CD4-positive, alpha-beta T cell (primary cell): ENCODE measurements at regions of chr3 and their contacts with region 1.

Region 1: DNA sequence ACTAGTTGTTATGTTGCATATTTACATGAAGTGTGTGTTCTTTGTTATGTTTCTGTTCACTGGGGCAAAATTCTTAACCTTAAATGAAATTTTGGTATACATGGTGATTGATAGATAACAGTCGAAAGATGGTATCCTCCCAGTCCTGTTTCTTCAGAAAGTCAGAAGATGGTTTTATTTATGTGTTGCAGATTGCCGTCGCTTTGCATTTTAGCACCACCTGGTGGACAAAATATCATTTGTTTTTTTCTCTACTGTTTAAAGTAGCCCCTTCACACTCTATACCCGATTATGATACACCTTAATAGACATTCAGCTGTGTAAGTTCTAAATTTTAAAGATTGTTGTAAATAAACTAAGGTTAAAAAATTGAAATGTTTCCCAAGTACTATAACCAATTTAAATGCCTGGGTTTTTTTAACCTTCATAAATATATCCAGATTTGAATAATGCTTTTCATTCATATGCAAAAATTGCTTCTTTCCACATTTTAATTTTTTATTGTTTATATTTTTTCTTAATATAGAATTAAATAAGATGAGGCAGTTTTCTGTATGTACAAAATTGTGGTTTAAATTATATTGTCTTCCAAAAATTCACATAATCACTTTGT is 152.2 kb downstream of the ALCAM start:
- DNase-seq: peak in 7 of 14 experiments; percentile 1 to 74 (median 31)
- ATAC-seq: peak; percentile 64
- H3K4me3 ChIP-seq: no peak overlapping the region
- H3K4me3 Mint-ChIP-seq: no peak overlapping the region
- H3K27ac ChIP-seq: no peak overlapping the region
- H3K27ac Mint-ChIP-seq: no peak overlapping the region
- H3K4me1 ChIP-seq: no peaks in the 10 kb centered on the region
- H3K4me1 Mint-ChIP-seq: peaks cover 4% of the 10 kb centered on the region
- H3K27me3 ChIP-seq: no peaks in the 10 kb centered on the region
- H3K27me3 Mint-ChIP-seq: no peaks in the 10 kb centered on the region
- CTCF ChIP-seq: peak; percentile 81

Region 2: GRCh38 chr3:104564045-104564643 is 954.8 kb before region 1 on chr3:
- CTCF ChIA-PET with region 1: no interaction called
- POLR2A ChIA-PET with region 1: no interaction called
- intact Hi-C with region 1: loop called (anchors 2 to 5 kb)
- DNase-seq: peak; percentile 22 to 67 (median 50)
- ATAC-seq: no peak
- H3K4me3 ChIP-seq: no peak overlapping the region
- H3K4me3 Mint-ChIP-seq: no peak overlapping the region
- H3K27ac ChIP-seq: no peak overlapping the region
- H3K27ac Mint-ChIP-seq: no peak overlapping the region
- H3K4me1 ChIP-seq: no peaks in the 10 kb centered on the region
- H3K4me1 Mint-ChIP-seq: no peaks in the 10 kb centered on the region
- H3K27me3 ChIP-seq: no peaks in the 10 kb centered on the region
- H3K27me3 Mint-ChIP-seq: peaks cover 5% of the 10 kb centered on the region
- CTCF ChIP-seq: peak; percentile 90

Region 3: GRCh38 chr3:104596551-104596950 is 922.4 kb before region 1 on chr3:
- CTCF ChIA-PET with region 1: interaction called, 3 read pairs
- POLR2A ChIA-PET with region 1: no interaction called
- intact Hi-C with region 1: loop called in 1 of 2 experiments (anchors 10 kb)
- DNase-seq: peak in 3 of 14 experiments; percentile 36 to 45 (median 44)
- ATAC-seq: no peak
- H3K4me3 ChIP-seq: no peak overlapping the region
- H3K4me3 Mint-ChIP-seq: no peak overlapping the region
- H3K27ac ChIP-seq: no peak overlapping the region
- H3K27ac Mint-ChIP-seq: no peak overlapping the region
- H3K4me1 ChIP-seq: no peaks in the 10 kb centered on the region
- H3K4me1 Mint-ChIP-seq: no peaks in the 10 kb centered on the region
- H3K27me3 ChIP-seq: no peaks in the 10 kb centered on the region
- H3K27me3 Mint-ChIP-seq: no peaks in the 10 kb centered on the region
- CTCF ChIP-seq: peak; percentile 28